PC-9 (cell line): ENCODE measurements at regions of chr15 and their contacts with region 1.

Region 1: DNA sequence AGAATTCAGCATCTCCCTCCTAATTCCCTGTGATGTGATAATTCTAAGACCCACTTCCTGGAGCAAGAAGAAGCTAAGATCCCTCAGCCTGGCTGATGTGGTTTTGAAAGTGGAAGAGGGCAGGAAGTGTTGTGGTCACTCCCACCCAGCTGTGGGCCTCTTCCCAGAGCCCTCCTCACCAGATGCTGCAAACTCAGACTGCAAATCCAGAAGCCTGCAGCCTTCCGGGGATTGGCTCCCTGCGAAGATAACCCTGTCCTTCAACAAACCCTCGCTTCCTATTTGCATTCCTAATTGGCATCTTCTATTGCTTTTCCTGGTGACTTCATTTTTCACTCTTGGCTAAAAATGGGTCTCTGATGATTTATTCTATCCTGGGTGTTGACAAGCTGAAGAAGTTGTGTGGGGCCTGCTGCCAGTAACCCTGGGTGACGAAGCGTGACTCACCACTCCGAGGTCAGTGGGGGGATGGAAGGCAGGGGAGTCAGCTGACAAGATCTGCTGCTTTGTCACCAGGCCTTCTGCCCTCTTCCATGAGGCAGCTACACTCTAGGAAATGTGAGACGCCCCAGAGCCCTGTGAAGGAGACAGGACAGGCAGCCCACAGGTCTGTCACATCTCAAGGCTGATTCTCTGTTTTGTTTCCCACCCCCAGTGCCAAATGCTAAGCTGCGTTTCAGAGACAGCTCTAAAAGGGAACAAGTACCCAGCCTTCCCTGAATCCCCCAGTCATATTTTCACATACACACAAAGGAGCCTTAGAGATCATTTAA is 99.7 kb upstream of the LIPC start:
- DNase-seq: peak; percentile 96
- H3K4me3 ChIP-seq: peak overlapping the region; percentile 52; the same call in 1 of the 2 replicates
- H3K27ac ChIP-seq: peak overlapping the region; percentile 98
- H3K4me1 ChIP-seq: peaks cover 55% of the 10 kb centered on the region
- H3K27me3 ChIP-seq: no peaks in the 10 kb centered on the region
- CTCF ChIP-seq: no peak

Region 2: DNA sequence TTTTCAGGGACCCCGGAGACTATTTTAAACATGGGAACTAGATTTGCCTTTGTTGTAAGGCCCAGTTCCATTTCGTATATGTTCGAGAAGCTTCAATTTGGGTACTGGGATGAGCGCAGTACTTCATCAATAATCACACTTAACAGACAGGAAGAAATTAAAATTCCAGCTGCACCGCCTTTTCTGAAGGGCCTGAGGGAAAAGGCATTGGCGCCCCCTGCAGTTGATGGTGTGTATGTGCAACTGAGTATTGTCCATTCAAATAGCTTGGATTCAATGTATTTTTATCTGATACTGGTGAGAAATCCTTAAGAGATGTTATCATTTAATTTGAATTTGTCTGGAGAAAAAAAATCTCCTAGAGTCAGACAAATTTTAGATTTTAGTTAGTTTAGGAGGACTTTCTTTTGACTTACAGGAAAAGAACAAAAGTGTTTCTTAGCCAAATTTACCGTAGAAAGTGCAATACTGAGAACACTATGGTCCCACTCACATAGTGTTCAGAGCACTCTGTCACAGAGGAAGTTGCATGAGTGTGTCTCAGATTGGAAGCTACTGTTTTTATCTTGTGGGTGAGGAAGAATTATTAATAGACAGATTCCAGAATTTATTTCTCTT is 261.2 kb before region 1 on chr15:
- CTCF ChIA-PET with region 1: no interaction called
- POLR2A ChIA-PET with region 1: no interaction called
- intact Hi-C with region 1: no loop called
- DNase-seq: peak in 1 of 2 experiments; percentile 57
- H3K4me3 ChIP-seq: no peak overlapping the region
- H3K27ac ChIP-seq: no peak overlapping the region
- H3K4me1 ChIP-seq: no peaks in the 10 kb centered on the region
- H3K27me3 ChIP-seq: no peaks in the 10 kb centered on the region
- CTCF ChIP-seq: peak; percentile 86

Region 3: DNA sequence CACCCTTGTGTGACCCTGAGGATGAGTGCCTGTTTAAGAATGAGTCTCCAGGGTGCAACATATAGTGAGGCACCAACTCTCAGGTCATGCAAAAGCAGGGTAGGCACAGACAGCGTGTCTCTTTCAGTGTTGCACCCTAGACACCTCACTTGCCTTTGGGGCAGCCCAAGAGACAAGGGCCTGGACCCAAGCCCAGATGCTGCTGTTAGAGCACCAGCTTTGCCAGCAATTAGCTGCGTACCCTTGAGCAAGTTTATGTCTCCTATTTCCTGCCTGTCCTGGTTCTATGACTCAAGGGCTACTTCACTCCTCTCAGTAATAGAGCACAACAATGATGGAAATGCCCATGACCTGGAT is 71.2 kb before region 1 on chr15:
- CTCF ChIA-PET with region 1: no interaction called
- POLR2A ChIA-PET with region 1: no interaction called
- intact Hi-C with region 1: loop called (anchors 1 kb)
- DNase-seq: peak; percentile 48 to 83
- H3K4me3 ChIP-seq: 0 out of 2 replicates have a peak overlapping the region, but pooled peaks have one; percentile 27
- H3K27ac ChIP-seq: peak overlapping the region; percentile 98
- H3K4me1 ChIP-seq: peaks cover 46% of the 10 kb centered on the region
- H3K27me3 ChIP-seq: no peaks in the 10 kb centered on the region
- CTCF ChIP-seq: no peak

Region 4: GRCh38 chr15:58346389-58346788 is 14.3 kb after region 1 on chr15:
- CTCF ChIA-PET with region 1: interaction called, 4 read pairs
- POLR2A ChIA-PET with region 1: no interaction called
- intact Hi-C with region 1: loop called (anchors 1 kb)
- DNase-seq: peak; percentile 84 to 91
- H3K4me3 ChIP-seq: no peak overlapping the region
- H3K27ac ChIP-seq: peak overlapping the region; percentile 51
- H3K4me1 ChIP-seq: peaks cover 23% of the 10 kb centered on the region
- H3K27me3 ChIP-seq: no peaks in the 10 kb centered on the region
- CTCF ChIP-seq: no peak

Region 5: DNA sequence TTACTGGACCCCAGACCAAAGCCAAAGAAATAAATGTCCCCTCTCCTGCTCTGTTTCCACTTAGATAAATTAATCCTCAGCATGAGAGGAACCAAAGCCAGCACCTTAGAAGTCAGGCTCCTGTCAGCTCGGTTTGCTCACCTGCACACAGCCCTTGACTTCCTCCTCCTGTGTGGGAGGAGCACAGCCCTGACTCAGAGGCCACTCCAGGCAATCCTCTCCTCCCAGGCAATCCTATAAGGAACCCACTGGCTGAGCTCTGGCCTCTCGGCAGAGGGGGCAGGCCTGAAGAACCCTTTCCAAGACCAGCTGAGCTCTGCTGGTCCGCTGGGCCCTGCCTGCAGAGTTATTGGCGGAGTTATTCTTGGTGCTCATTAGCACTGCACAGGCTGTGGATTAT is 130.5 kb after region 1 on chr15:
- CTCF ChIA-PET with region 1: interaction called, 4 read pairs
- POLR2A ChIA-PET with region 1: interaction called, 12 read pairs
- intact Hi-C with region 1: no loop called
- DNase-seq: peak; percentile 75 to 79
- H3K4me3 ChIP-seq: no peak overlapping the region
- H3K27ac ChIP-seq: peak overlapping the region; percentile 47
- H3K4me1 ChIP-seq: peaks cover 43% of the 10 kb centered on the region
- H3K27me3 ChIP-seq: no peaks in the 10 kb centered on the region
- CTCF ChIP-seq: no peak

Region 6: GRCh38 chr15:58521293-58521991 is 189.4 kb after region 1 on chr15:
- CTCF ChIA-PET with region 1: no interaction called
- POLR2A ChIA-PET with region 1: interaction called, 20 read pairs
- intact Hi-C with region 1: loop called (anchors 1 kb)
- DNase-seq: peak; percentile 89 to 98
- H3K4me3 ChIP-seq: peak overlapping the region; percentile 49; the same call in 1 of the 2 replicates
- H3K27ac ChIP-seq: peak overlapping the region; percentile 97
- H3K4me1 ChIP-seq: peaks cover 50% of the 10 kb centered on the region
- H3K27me3 ChIP-seq: no peaks in the 10 kb centered on the region
- CTCF ChIP-seq: no peak

Region 7: DNA sequence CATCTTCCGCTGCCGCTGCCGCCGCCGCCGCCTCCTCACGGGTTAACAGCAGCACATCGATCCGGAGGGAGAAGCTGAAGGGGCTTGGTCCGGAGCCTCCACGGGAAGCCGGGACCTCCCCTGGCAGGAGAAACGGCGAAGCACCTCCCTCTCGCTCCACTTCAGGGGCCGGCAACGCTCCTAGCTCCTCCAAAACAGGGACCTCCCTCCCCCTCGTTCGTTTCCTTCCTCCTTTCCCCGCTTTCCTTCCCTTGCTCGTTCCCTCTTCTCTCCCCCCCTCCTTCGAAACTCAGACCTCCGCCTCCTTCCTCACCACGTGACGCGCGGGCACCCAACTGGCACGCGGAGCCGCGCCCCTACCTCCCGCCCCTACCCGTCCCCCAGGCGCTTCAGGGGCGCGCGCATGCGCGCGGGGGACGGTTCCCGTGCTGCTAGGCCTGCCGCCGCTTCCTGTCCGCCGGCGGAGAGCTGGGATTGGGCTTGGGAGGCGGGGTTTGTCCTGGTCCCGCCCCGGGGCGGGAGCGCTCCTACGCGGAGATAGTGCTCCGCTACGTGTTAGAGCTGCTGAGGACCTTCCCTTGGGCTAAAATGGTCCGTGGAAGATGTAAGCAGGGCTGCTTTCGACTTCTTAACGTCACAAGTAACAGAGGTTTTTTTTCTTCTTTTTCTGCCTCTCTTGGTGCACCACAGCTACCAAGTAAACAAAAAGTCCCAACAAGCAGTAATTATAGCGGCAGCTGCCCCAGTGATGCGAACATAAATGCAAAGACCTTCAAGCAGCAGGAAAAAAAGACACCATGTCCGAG is 417.6 kb after region 1 on chr15 and contains the start of gene ADAM10:
- CTCF ChIA-PET with region 1: no interaction called
- POLR2A ChIA-PET with region 1: interaction called, 9 read pairs
- intact Hi-C with region 1: loop called (anchors 2 kb)
- DNase-seq: peak; percentile 89 to 98
- H3K4me3 ChIP-seq: peak within 1 kb of the TSS; percentile 97
- H3K27ac ChIP-seq: peak within 1 kb of the TSS; percentile 79
- H3K4me1 ChIP-seq: peaks cover 20% of the 10 kb centered on the region
- H3K27me3 ChIP-seq: no peaks in the 10 kb centered on the region
- CTCF ChIP-seq: no peak
- total RNA-seq, gene ADAM10: 160 and 239 TPM in 2 replicates

Region 8: DNA sequence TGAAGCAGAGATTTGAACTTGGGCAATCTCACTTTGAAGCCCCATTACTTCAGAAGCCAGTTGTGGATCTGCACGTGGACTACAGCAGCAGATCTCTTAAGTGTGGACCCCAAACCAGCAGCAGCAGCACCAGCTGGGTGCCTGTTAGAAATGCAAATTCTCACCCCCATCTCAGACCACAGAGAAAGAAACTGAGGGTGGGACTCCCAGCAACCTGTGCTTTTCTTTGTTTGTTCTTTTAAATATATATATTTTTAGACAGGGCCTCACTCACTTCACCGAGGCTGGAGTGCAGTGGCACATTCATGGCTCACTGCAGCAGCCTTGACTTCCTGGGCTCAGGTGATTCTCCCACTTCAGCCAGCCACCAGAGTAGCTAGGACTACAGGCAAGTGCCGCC is 548.2 kb after region 1 on chr15:
- CTCF ChIA-PET with region 1: no interaction called
- POLR2A ChIA-PET with region 1: no interaction called
- intact Hi-C with region 1: no loop called
- DNase-seq: no peak
- H3K4me3 ChIP-seq: no peak overlapping the region
- H3K27ac ChIP-seq: no peak overlapping the region
- H3K4me1 ChIP-seq: no peaks in the 10 kb centered on the region
- H3K27me3 ChIP-seq: no peaks in the 10 kb centered on the region
- CTCF ChIP-seq: no peak

Region 9: GRCh38 chr15:58933281-58934113 is 601.4 kb after region 1 on chr15 and contains the start of gene SLTM:
- CTCF ChIA-PET with region 1: no interaction called
- POLR2A ChIA-PET with region 1: no interaction called
- intact Hi-C with region 1: loop called (anchors 10 kb)
- DNase-seq: peak; percentile 85 to 89
- H3K4me3 ChIP-seq: peak within 1 kb of the TSS; percentile 96
- H3K27ac ChIP-seq: peak within 1 kb of the TSS; percentile 98
- H3K4me1 ChIP-seq: peaks cover 21% of the 10 kb centered on the region
- H3K27me3 ChIP-seq: no peaks in the 10 kb centered on the region
- CTCF ChIP-seq: peak; percentile 46; the same call in 1 of the 2 replicates
- total RNA-seq, gene SLTM: 81.4 and 110 TPM in 2 replicates